ENCODE measurements at regions of chr3 and their contacts with region 1.

Region 1: DNA sequence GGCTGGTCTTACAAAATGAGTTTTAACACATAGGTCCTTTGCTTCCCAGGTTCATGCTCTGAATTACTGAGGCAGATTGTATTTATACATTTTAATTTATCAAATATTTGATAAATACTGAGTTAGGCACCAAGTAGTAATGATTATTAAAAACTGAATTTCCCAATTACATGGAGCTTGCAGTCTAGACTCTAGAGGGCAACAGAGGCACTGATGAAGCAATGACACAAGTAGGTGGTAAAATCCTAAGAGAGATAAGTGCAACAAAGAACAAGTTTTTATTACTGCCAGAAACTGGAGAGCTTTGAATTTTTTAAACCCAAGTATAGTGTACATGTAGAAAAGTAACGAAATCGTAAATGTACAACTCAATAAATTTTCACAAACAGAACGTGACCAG is 406.2 kb upstream of the RARB start:
- DNase-seq: no peak
- H3K4me3 ChIP-seq: no peak overlapping the region
- CTCF ChIP-seq: peak; percentile 66

Region 2: DNA sequence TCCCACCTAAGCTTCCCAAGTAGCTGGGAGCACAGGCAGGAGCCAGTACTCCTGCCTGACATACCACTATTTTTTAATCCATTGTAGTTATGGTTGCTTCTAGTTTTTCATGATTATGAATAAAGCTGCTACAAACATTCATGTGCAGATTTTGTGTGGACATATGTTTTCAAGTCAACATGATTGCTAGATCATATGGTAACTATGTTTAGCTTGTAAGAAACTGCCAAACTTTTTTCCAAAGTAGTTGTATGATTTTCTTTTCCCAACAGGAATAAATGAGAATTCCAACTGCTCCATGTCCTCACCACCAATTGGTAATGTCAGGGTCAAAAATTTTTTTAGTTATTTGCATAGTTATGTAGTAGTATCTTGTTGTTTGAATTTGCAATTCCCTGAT is 390.3 kb before region 1 on chr3:
- CTCF ChIA-PET with region 1: no interaction called
- POLR2A ChIA-PET with region 1: no interaction called
- DNase-seq: no peak
- H3K4me3 ChIP-seq: no peak overlapping the region
- CTCF ChIP-seq: no peak

Region 3: GRCh38 chr3:25007974-25008658 is 13.7 kb before region 1 on chr3:
- CTCF ChIA-PET with region 1: interaction called, 10 read pairs
- POLR2A ChIA-PET with region 1: no interaction called
- DNase-seq: no peak
- H3K4me3 ChIP-seq: no peak overlapping the region
- CTCF ChIP-seq: no peak

Region 4: GRCh38 chr3:25033407-25034029 is 11.7 kb after region 1 on chr3:
- CTCF ChIA-PET with region 1: interaction called, 91 read pairs
- POLR2A ChIA-PET with region 1: no interaction called
- DNase-seq: no peak
- H3K4me3 ChIP-seq: no peak overlapping the region
- CTCF ChIP-seq: peak; percentile 47

Region 5: DNA sequence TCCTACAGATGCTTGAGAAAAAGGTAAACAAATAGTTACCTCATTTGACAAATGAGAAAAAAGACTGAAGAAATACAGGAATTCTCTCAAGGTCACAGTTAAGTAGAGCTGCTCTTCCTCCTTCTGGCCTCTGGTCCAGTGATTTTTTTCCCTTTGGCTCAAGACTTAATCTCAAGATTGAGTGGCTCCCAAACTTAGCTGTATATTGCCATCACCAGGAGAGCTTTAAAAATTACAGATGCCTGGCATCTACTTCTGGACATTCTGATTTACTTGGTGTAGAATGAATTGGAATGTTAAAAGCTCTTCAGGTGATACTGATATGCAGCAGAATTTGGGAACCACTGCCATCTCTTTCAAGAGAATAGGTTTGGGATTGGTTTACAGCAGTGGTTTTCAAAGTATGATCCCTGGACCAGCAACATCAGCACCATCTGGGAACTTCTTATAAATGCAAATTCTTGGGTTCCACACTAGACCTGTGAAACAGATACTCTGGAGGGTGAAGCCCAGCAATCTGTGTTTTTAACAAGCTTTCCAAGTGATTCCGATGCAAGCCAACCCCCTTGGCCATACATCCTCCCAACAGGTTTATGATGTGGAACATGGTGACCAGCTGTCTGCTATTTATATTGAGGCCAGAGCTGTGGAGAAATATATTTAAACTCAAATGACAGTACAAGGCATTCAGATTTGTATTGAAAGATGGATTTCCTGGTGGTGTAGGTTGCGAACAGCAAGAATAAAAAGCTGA is 73.3 kb after region 1 on chr3:
- CTCF ChIA-PET with region 1: interaction called, 19 read pairs
- POLR2A ChIA-PET with region 1: no interaction called
- DNase-seq: no peak
- H3K4me3 ChIP-seq: no peak overlapping the region
- CTCF ChIP-seq: no peak

Region 6: DNA sequence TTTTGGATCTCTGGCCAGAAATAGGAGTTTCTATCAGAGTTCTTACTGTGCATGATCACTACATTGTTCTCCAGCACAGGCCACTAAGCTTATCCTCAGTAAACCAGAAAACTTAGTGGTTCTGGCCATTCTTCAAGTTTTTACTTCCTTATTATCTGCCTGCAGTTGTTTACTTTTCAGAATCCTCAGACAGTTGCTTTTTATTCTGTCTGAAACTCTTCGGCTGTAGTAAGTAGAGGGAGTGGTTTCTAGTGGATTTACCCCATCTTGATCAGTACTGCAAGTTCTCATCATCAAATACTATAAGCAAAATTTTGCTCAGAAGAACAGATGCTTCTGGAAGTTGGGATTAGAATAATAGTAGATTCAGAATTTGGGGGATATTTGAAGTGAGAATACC is 213.2 kb after region 1 on chr3:
- CTCF ChIA-PET with region 1: no interaction called
- POLR2A ChIA-PET with region 1: no interaction called
- DNase-seq: no peak
- H3K4me3 ChIP-seq: no peak overlapping the region
- CTCF ChIP-seq: no peak